Ovary (tissue), 10 donors: ENCODE measurements at regions of chr17 and their contacts with region 1.

Region 1: GRCh38 chr17:56779898-56780733 is 53.6 kb downstream of the C17orf67 start:
- DNase-seq: peak; percentile 39 to 76 (median 52)
- H3K4me3 ChIP-seq: no peak overlapping the region
- H3K27ac ChIP-seq: no peak overlapping the region
- H3K4me1 ChIP-seq: peaks cover 2% of the 10 kb centered on the region
- H3K27me3 ChIP-seq: no peaks in the 10 kb centered on the region
- CTCF ChIP-seq: peak; percentile 54 to 90 (median 59)
- EP300 ChIP-seq: no peak
- POLR2A ChIP-seq: no peak

Region 2: GRCh38 chr17:56592487-56593085 is 187.5 kb before region 1 on chr17:
- intact Hi-C with region 1: loop called in 1 of 4 experiments (anchors 5 kb)
- DNase-seq: peak; percentile 22 to 76 (median 55)
- H3K4me3 ChIP-seq: peak overlapping the region; percentile 33
- H3K27ac ChIP-seq: no peak overlapping the region
- H3K4me1 ChIP-seq: peaks cover 8% of the 10 kb centered on the region
- H3K27me3 ChIP-seq: no peaks in the 10 kb centered on the region
- CTCF ChIP-seq: peak; percentile 54 to 81 (median 77)
- EP300 ChIP-seq: no peak
- POLR2A ChIP-seq: no peak

Region 3: DNA sequence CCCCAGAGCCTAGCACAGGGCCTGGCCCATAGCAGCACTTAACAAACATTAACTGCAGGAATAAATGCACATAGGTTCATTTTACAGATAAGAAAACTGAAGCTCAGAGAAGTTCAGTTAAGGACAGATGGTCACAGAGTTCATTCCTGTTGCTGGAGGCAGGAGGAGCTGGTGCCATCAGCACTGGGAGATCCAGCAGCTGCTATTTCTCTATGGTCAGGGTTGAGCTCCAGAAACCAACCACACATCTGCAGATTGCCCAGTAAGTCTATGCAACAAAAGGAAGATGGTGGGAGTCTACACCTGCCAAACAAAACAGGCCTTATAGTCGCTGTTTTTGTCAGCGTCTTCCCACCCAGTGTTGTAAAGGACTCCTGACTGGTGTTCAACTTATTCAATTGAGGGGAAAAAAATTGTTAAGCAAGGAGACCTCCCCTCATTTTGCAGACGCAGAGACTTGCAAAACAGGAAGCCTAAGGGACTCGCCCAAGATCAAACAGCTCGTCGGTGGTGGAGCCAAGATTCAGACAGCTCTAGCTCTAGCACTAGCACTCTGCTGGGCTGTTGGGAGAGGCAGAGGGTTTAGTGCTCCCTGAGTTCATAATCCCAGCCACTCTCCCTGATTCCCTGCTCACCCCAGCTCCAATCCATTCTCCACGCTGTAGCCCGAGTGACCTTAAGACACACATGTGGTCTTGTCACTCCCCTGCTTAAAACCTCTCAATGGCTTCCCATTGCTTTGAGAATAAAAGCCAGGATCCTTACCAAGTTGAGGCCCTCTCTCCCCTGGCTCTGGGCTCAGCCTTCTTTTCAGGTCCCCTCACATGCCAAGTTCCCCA is 177.6 kb before region 1 on chr17:
- intact Hi-C with region 1: loop called in 1 of 4 experiments (anchors 10 kb)
- DNase-seq: no peak
- H3K4me3 ChIP-seq: no peak overlapping the region
- H3K27ac ChIP-seq: no peak overlapping the region
- H3K4me1 ChIP-seq: peaks cover 2% of the 10 kb centered on the region
- H3K27me3 ChIP-seq: no peaks in the 10 kb centered on the region
- CTCF ChIP-seq: no peak
- EP300 ChIP-seq: no peak
- POLR2A ChIP-seq: no peak